ENCODE measurements at regions of chr17 and their contacts with region 1.

Region 1: GRCh38 chr17:73595479-73595878 is 48.8 kb downstream of the SDK2 start:
- DNase-seq: peak in 8 of 14 experiments; percentile 12 to 30 (median 25)
- ATAC-seq: no peak
- H3K4me3 ChIP-seq: no peak overlapping the region
- H3K4me3 Mint-ChIP-seq: no peak overlapping the region
- H3K27ac ChIP-seq: peak overlapping the region in 1 of 2 donors; percentile 10
- H3K27ac Mint-ChIP-seq: peak overlapping the region; percentile 90
- H3K4me1 ChIP-seq: peaks cover 61% of the 10 kb centered on the region
- H3K4me1 Mint-ChIP-seq: peaks cover 67% of the 10 kb centered on the region
- H3K27me3 ChIP-seq: no peaks in the 10 kb centered on the region
- H3K27me3 Mint-ChIP-seq: no peaks in the 10 kb centered on the region
- CTCF ChIP-seq: peak; percentile 24

Region 2: DNA sequence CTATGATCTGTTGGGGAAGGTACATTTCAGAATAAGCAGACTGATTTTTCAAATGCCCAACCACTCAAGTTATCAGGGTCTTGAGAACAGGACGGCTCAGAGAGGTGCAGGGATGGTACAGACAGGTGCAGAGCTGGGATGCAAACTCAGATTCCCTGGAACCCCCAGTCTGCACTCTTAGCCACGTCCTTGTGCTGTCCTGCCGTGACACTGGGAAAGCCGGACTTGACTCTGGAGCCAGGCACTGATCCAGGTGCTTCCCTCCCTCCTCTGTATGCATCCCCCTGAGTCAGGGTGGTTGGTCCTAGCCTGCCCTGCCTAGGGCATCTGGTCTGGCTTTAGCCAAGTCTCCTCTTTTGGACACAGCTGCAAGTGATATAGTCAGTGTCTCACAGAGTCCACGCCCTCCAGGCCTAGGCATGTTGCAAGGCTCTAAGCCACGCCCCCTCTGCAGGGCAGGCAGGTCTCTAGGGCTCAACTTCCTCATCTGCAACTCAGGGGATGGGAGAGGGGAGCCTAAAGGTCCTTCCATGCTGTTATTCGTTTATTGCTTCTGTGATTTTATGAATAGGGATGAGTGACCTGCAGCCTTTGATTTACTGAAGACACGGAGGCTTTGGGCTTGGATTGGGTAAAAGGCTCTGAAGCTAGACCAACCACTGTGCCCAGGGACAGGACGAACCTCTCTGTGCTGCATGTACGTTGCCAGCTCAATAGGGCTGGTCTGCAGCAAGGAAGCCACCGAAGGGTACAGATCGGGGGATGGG is 48.5 kb before region 1 on chr17:
- CTCF ChIA-PET with region 1: no interaction called
- POLR2A ChIA-PET with region 1: no interaction called
- intact Hi-C with region 1: loop called in 1 of 2 experiments (anchors 10 kb)
- DNase-seq: peak in 12 of 14 experiments; percentile 4 to 64 (median 36)
- ATAC-seq: peak; percentile 79
- H3K4me3 ChIP-seq: no peak overlapping the region
- H3K4me3 Mint-ChIP-seq: no peak overlapping the region
- H3K27ac ChIP-seq: no peak overlapping the region
- H3K27ac Mint-ChIP-seq: no peak overlapping the region
- H3K4me1 ChIP-seq: no peaks in the 10 kb centered on the region
- H3K4me1 Mint-ChIP-seq: peaks cover 32% of the 10 kb centered on the region
- H3K27me3 ChIP-seq: no peaks in the 10 kb centered on the region
- H3K27me3 Mint-ChIP-seq: no peaks in the 10 kb centered on the region
- CTCF ChIP-seq: no peak

Region 3: DNA sequence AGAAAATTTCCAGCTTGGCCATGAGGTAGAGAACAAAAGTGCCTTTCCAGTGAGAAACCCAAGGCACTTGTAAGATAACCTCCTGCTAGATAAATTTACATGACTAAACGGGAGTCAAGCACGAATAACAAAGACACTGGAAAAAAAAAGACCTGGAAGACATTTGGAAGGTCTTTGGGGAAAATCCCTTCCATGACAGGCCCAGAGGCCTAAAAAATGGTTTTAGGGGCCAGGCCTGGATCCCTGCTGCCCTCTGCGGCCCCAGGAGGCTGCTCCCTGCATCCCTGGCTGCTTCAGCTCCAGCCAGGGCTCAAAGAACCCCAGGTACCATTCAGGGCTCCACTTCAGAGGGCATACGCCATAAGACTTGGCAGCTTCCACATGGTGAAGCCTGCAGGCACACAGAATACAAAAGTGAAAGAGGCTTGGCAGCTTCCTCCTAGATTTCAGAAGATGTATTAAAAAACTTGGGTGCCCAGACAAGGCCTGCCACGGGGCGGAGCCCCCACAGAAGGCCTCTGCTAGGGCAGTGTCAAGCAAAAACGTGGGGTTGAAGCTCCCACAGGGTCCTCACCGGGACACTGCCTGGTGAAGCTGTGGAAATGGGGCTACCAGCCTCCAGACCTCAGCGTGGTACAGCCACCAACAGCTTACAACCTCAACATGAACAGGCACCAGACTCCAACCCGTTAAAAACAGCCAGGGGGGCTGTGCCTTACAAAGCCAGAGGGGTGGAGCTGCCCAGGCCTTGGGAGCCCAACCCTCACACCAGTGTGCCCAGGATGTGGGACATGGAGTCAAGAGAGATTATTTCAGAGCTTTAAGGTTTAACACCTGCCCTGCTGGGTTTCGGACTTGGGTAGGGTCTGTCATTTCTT is 28.3 kb before region 1 on chr17:
- CTCF ChIA-PET with region 1: no interaction called
- POLR2A ChIA-PET with region 1: interaction called, 39 read pairs
- intact Hi-C with region 1: no loop called
- DNase-seq: peak in 10 of 14 experiments; percentile 6 to 46 (median 32)
- ATAC-seq: peak; percentile 70
- H3K4me3 ChIP-seq: no peak overlapping the region
- H3K4me3 Mint-ChIP-seq: peak overlapping the region; percentile 38
- H3K27ac ChIP-seq: peak overlapping the region in 1 of 2 donors; percentile 51
- H3K27ac Mint-ChIP-seq: peak overlapping the region; percentile 85
- H3K4me1 ChIP-seq: peaks cover 8% of the 10 kb centered on the region
- H3K4me1 Mint-ChIP-seq: peaks cover 28% of the 10 kb centered on the region
- H3K27me3 ChIP-seq: no peaks in the 10 kb centered on the region
- H3K27me3 Mint-ChIP-seq: no peaks in the 10 kb centered on the region
- CTCF ChIP-seq: no peak